Posterior vena cava (tissue), 2 donors: ENCODE measurements at regions of chr9 and their contacts with region 1.

Region 1: GRCh38 chr9:7676609-7677156 is 122.9 kb downstream of the DMAC1 start:
- DNase-seq: no peak

Region 2: GRCh38 chr9:7656636-7657035 is 20.0 kb before region 1 on chr9:
- intact Hi-C with region 1: loop called in 1 of 2 experiments (anchors 2 kb)
- DNase-seq: no peak